ENCODE measurements at regions of chr1 and their contacts with region 1.

Region 1: DNA sequence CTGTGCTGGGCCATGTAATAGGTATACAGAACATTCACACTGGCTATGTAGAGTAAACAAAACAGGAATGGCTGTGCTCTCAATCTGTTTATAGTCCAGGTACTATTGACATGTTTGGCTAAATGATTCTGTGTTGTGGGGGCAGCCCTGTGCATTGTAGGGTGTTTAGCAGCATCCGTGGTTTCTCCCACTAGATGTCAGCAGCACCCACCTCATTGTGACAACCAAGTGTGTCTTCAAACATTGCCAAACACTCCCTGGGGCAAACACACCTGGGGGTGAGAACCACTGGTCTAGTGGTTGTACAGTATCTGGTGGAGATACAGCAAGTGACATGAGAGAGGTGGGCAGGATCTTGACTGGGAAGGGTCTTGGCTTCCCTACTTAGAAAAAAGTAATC is 80.4 kb upstream of the SPATA6 start:
- DNase-seq: peak; percentile 41 to 46
- H3K4me3 ChIP-seq: no peak overlapping the region
- H3K4me3 Mint-ChIP-seq: no peak overlapping the region
- H3K27ac Mint-ChIP-seq: no peak overlapping the region
- H3K4me1 ChIP-seq: no peaks in the 10 kb centered on the region
- H3K4me1 Mint-ChIP-seq: no peaks in the 10 kb centered on the region
- H3K27me3 ChIP-seq: no peaks in the 10 kb centered on the region
- H3K27me3 Mint-ChIP-seq: peaks cover 28% of the 10 kb centered on the region
- CTCF ChIP-seq: peak in 1 of 2 experiments; percentile 27

Region 2: DNA sequence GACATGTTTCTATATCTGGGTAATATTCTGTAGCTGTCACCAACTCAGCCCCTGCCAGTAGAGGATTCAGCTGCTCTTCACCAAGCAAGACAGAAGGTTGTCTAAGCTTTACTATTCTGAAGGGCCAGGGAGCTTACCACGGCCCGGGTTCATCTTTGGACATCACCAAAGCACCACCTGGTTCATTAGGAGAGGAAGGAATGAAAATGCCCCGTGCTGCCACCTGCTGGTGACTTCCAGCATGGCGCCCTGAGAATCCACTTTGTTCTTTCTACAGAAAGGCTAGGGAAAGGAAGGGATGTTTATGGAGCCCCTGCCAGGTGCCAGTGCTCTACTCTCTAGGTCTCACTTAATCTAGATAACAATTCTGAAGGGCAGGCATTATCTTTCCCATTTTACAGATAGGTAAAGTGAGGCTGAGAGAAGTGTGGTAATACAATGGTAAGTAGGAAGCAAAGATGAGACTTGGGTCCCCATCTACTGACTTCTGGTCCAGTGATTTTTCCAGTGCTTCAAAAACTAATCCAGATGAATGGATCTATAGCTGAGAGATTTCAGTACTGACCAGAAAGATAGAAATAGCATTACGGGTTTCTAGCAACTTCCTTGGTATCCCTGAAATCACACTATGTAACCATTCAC is 144.8 kb after region 1 on chr1:
- CTCF ChIA-PET with region 1: no interaction called
- POLR2A ChIA-PET with region 1: no interaction called
- intact Hi-C with region 1: loop called (anchors 1 kb)
- DNase-seq: peak; percentile 42 to 64
- H3K4me3 ChIP-seq: no peak overlapping the region
- H3K4me3 Mint-ChIP-seq: no peak overlapping the region
- H3K27ac Mint-ChIP-seq: no peak overlapping the region
- H3K4me1 ChIP-seq: no peaks in the 10 kb centered on the region
- H3K4me1 Mint-ChIP-seq: no peaks in the 10 kb centered on the region
- H3K27me3 ChIP-seq: no peaks in the 10 kb centered on the region
- H3K27me3 Mint-ChIP-seq: peaks cover 11% of the 10 kb centered on the region
- CTCF ChIP-seq: peak; percentile 72 to 78

Region 3: DNA sequence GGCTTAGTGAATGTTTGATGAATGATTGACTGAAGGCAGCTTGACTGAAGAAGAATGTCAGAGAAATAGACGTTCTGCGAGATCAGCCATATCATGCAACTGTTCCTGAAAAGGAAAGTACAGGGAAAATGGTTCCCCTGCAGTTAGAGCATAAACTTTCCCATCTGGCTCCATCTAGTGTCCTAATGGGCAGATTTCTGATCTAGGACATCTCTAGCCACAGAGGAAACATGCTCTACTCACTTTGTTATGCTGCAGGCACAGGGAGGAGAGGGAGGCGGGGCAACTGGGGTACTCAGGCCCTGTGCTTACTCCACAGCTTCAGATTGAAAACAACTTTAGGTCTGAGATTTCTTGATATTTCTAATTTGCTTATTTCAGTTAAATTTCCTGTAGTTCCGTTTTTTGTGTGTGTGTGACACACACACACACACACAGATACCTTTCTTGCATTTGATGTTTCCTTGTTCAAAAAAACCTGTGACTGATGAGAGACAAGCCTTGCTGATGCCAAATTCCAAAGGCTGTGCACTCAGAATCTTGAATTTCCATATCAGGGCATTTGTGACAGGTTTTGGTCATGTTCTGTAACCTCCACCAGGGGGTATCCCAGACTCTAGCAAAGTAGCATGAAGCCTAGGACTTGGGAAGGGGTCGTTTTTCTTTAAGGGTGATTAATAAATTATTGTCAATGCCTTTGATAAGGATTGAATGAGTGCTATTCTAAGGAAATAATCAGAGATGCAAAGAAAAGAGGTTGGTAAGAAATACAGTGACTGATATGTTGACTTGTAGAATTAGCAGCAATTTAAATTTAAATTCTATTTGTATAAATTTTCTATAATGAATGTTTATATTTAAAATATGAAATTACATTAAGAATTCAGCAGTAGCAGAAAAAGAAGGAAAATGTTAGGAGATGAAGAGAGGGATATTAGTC is 364.0 kb after region 1 on chr1:
- CTCF ChIA-PET with region 1: no interaction called
- POLR2A ChIA-PET with region 1: no interaction called
- intact Hi-C with region 1: loop called (anchors 1 kb)
- DNase-seq: peak; percentile 37 to 43
- H3K4me3 ChIP-seq: no peak overlapping the region
- H3K4me3 Mint-ChIP-seq: no peak overlapping the region
- H3K27ac Mint-ChIP-seq: peak overlapping the region; percentile 53
- H3K4me1 ChIP-seq: peaks cover 6% of the 10 kb centered on the region; the same call in 1 of the 2 replicates
- H3K4me1 Mint-ChIP-seq: no peaks in the 10 kb centered on the region
- H3K27me3 ChIP-seq: no peaks in the 10 kb centered on the region
- H3K27me3 Mint-ChIP-seq: no peaks in the 10 kb centered on the region
- CTCF ChIP-seq: peak in 1 of 2 experiments; percentile 59

Measured in Caco-2 (cell line).